Activated T-helper 1 cell treated with anti-CD3 and anti-CD28 coated beads, Interleukin-12 subunit alpha, Interleukin-12 subunit beta, Interleukin-2, Interleukin-4 antibody, amounts not matched to agents 30 ng/mL and 10 ng/mL and 1 ng/mL, durations not matched to agents 14 hours and 24 hours and 36 hours (primary cell): ENCODE measurements at regions of chr2 and their contacts with region 1.

Region 1: GRCh38 chr2:159960383-159960782 is 102.0 kb downstream of the PLA2R1 start:
- DNase-seq: no peak
- H3K4me3 Mint-ChIP-seq: no peak overlapping the region
- H3K27ac Mint-ChIP-seq: no peak overlapping the region
- H3K4me1 Mint-ChIP-seq: peaks cover 8% of the 10 kb centered on the region
- H3K27me3 Mint-ChIP-seq: peaks cover 4% of the 10 kb centered on the region

Region 2: GRCh38 chr2:159904127-159904958 is 56.0 kb before region 1 on chr2:
- intact Hi-C with region 1: loop called (anchors 5 kb)
- DNase-seq: peak; percentile 69
- H3K4me3 Mint-ChIP-seq: peak within 1 kb of the TSS; percentile 92
- H3K27ac Mint-ChIP-seq: peak within 1 kb of the TSS; percentile 91
- H3K4me1 Mint-ChIP-seq: peaks cover 41% of the 10 kb centered on the region
- H3K27me3 Mint-ChIP-seq: no peaks in the 10 kb centered on the region

Region 3: DNA sequence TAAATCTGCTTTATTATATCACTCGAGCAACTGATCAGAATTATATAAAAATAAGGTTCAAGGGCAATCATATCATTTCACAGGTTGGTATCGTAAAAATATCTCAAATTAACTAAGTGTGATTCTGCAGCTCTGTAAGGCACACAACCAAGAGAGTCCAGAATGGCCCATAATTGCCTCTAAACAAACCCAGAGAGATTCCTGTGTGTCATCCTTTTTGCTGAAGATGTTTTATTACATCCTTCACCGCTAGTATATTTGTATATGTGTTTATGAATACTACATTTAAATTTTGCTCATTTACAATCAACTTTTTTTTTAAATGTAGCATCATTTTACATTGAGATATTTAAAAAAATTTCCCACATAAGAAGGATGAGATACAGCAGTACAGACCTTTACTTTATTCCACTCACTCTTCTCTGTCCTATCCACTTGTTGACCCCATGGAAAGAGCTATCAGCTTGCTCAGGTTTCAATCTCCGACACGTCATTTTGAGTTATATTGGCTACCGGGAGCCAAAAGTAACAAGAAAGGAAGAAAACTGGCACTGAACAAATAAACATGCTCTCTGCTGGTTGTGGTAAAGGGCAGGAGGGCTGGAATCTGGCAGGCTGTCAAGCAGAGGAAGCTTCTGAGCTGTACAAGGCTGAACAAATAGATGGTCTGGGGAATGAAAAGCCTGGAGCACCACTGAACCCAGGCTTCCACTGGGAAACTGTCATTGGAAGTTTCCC is 79.0 kb after region 1 on chr2:
- intact Hi-C with region 1: no loop called
- DNase-seq: no peak
- H3K4me3 Mint-ChIP-seq: no peak overlapping the region
- H3K27ac Mint-ChIP-seq: no peak overlapping the region
- H3K4me1 Mint-ChIP-seq: peaks cover 8% of the 10 kb centered on the region
- H3K27me3 Mint-ChIP-seq: peaks cover 11% of the 10 kb centered on the region